ENCODE measurements at regions of chr14 and their contacts with region 1.

Region 1: DNA sequence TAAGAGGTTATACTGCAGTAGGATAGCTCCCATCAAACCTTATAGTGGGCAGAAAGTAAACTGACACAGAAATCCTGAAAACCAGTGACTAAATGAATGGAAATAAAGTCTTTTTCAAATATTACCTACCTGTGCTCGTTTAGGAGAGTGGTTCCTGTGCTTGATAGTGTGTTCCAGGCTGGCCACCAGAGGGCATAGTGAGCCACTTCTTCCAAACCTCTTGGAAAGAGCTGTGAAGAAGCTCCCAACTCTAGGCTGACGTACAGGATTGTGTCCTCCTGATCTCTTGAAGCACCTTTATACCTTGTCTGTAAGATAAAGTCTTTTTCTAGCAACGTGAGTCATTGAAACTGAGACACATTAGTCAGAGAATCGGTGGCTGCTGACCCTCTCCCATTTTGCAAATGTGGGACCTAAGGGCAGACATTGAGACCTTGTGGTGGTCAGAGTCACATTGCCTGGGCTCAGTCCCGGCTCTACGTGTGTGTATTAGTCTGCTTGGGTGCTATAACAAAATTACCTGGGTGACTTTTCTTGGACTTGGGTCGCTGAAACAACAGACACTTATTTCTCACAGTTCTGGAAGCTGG is 17.6 kb downstream of the TDP1 start:
- DNase-seq: peak in 4 of 5 donors; percentile 10 to 56 (median 29)
- H3K4me3 ChIP-seq: no peak overlapping the region
- H3K4me3 Mint-ChIP-seq: no peak overlapping the region
- H3K27ac ChIP-seq: no peak overlapping the region
- H3K27ac Mint-ChIP-seq: peak overlapping the region in 2 of 8 donors; percentile 9 to 51
- H3K4me1 ChIP-seq: no peaks in the 10 kb centered on the region
- H3K4me1 Mint-ChIP-seq: peaks cover 0 to 5% (median 4%) of the 10 kb centered on the region in 3 donors
- H3K27me3 ChIP-seq: no peaks in the 10 kb centered on the region
- H3K27me3 Mint-ChIP-seq: peaks cover 0 to 2% of the 10 kb centered on the region in 2 donors

Region 2: DNA sequence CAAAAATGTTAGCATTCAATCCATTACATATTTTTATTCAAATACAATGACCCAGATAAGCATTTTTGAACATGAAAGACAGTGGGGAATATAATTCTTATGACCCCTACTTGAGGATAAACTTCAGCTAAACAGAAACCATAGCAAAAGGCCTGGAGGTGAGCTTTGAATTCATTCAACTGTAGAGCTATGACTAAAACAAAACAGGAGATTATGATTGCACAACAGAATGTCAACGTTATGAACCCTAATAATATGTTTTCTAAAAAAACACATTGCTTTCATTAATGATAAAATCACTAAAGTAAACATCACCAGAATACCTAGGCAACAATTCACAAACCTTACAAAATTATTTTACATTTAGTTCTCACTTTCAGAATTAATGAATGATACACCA is 46.6 kb before region 1 on chr14:
- CTCF ChIA-PET with region 1: no interaction called
- POLR2A ChIA-PET with region 1: no interaction called
- DNase-seq: no peak
- H3K4me3 ChIP-seq: no peak overlapping the region
- H3K4me3 Mint-ChIP-seq: no peak overlapping the region
- H3K27ac ChIP-seq: no peak overlapping the region
- H3K27ac Mint-ChIP-seq: no peak overlapping the region
- H3K4me1 ChIP-seq: no peaks in the 10 kb centered on the region
- H3K4me1 Mint-ChIP-seq: no peaks in the 10 kb centered on the region
- H3K27me3 ChIP-seq: no peaks in the 10 kb centered on the region
- H3K27me3 Mint-ChIP-seq: no peaks in the 10 kb centered on the region

Region 3: DNA sequence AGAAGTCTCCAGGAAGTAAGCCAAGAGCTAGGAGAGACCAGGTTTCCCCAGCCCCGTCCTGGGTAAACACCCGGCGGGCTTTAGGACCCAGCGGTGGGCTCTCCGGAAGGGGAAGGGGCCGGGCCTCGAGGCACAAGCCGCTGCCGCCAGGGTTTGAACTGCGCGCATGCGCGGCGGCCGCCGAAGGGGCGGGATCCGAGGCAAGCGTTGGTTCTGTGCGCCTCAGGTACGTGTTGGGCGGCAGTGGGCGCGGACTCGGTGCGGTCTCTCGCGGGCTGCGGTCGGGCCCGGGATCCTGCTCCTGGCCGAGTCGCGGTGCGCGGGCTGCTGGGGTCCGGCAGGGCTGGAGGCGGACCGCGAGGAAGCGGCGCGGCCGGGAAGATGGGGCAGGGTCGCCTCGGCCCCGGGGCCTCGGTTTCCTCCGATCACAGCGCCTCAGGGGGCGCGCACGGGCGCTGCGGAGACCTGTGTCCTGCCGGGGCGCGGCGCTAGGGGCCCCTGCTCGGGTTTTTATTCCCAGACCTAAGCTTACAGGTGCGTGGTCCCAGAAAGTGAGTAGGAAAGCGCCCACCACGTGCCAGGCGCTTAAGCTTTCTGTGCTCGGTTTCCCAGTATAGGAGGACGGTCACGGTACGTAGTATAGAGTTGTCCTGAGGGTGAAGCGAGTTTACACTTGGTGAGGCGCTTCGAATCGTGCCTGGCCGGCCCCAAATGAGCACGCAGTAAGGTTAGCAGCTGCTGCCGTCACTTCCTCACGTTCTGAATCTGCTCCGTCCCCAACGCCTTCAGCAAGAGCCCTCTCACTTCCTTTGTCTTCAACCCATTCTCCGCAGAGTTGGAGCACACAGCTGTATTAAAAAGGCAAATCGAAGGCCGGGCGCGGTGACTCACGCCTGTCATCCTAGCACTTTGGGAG is 17.3 kb before region 1 on chr14 and contains the start of gene TDP1:
- CTCF ChIA-PET with region 1: interaction called, 27 read pairs
- POLR2A ChIA-PET with region 1: interaction called, 3 read pairs
- DNase-seq: peak; percentile 92 to 98 (median 98)
- H3K4me3 ChIP-seq: peak within 1 kb of the TSS; percentile 92
- H3K4me3 Mint-ChIP-seq: peak within 1 kb of the TSS; percentile 87 to 97 (median 94)
- H3K27ac ChIP-seq: peak within 1 kb of the TSS; percentile 98
- H3K27ac Mint-ChIP-seq: peak within 1 kb of the TSS; percentile 97 to 99 (median 99)
- H3K4me1 ChIP-seq: peaks cover 53% of the 10 kb centered on the region
- H3K4me1 Mint-ChIP-seq: peaks cover 57 to 69% (median 60%) of the 10 kb centered on the region in 3 donors
- H3K27me3 ChIP-seq: no peaks in the 10 kb centered on the region
- H3K27me3 Mint-ChIP-seq: no peaks in the 10 kb centered on the region
- total RNA-seq, gene TDP1: 82.2 to 84.2 TPM

Measured in CD8-positive, alpha-beta memory T cell (primary cell).